Right ventricle myocardium inferior (tissue), 1 donor: ENCODE measurements at regions of chr1 and their contacts with region 1.

Region 1: GRCh38 chr1:179809506-179810366 is 66.6 kb downstream of the FAM163A start:
- DNase-seq: no peak
- ATAC-seq: peak; percentile 57

Region 2: GRCh38 chr1:179550754-179551682 is 258.7 kb before region 1 on chr1:
- intact Hi-C with region 1: no loop called
- DNase-seq: no peak
- ATAC-seq: peak; percentile 52

Region 3: GRCh38 chr1:179706339-179706941 is 103.3 kb before region 1 on chr1:
- intact Hi-C with region 1: loop called (anchors 1 kb)
- DNase-seq: no peak
- ATAC-seq: no peak

Region 4: GRCh38 chr1:179968994-179969919 is 159.5 kb after region 1 on chr1:
- intact Hi-C with region 1: no loop called
- DNase-seq: no peak
- ATAC-seq: peak; percentile 58